Head of caudate nucleus (tissue), 42 donors: ENCODE measurements at regions of chr13 and their contacts with region 1.

Region 1: GRCh38 chr13:48769107-48769704 is 115.5 kb downstream of the CYSLTR2 start:
- DNase-seq: peak in 39 of 42 donors; percentile 12 to 95 (median 76)

Region 2: GRCh38 chr13:48334534-48335127 is 434.6 kb before region 1 on chr13:
- intact Hi-C with region 1: loop called (anchors 10 kb)
- DNase-seq: peak in 1 of 42 donors; percentile 7